ENCODE measurements at regions of chr11 and their contacts with region 1.

Region 1: GRCh38 chr11:35363854-35364780 is 55.2 kb downstream of the SLC1A2 start:
- DNase-seq: peak; percentile 83
- H3K4me3 ChIP-seq: no peak overlapping the region
- H3K27ac ChIP-seq: peak overlapping the region; percentile 49
- H3K4me1 ChIP-seq: peaks cover 7% of the 10 kb centered on the region
- H3K27me3 ChIP-seq: no peaks in the 10 kb centered on the region
- CTCF ChIP-seq: no peak
- POLR2A ChIP-seq: no peak

Region 2: DNA sequence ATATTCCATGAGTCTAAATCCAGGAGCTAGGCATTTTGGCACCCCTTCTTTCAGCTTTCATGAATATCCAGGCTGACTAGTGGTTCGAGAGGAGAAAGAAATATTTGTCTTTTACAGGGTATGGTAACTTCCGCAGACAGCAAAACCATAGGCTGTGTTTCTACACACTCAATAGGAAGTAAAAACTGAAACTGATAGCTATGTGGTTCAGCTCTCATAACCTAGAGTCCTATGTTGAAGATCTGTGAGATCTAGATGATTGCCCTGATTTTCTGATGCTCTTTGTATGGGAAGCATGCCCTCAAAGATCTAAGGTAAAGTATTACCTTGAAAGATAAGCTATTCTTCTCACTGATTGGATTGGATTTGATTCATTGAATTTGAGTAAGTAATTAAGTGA is 106.8 kb before region 1 on chr11:
- intact Hi-C with region 1: loop called (anchors 10 kb)
- DNase-seq: no peak
- H3K4me3 ChIP-seq: no peak overlapping the region
- H3K27ac ChIP-seq: no peak overlapping the region
- H3K4me1 ChIP-seq: peaks cover 5% of the 10 kb centered on the region
- H3K27me3 ChIP-seq: no peaks in the 10 kb centered on the region
- CTCF ChIP-seq: no peak
- POLR2A ChIP-seq: no peak

Measured in prostate gland (tissue), 2 donors.